MCF 10A (cell line): ENCODE measurements at regions of chr4 and their contacts with region 1.

Region 1: DNA sequence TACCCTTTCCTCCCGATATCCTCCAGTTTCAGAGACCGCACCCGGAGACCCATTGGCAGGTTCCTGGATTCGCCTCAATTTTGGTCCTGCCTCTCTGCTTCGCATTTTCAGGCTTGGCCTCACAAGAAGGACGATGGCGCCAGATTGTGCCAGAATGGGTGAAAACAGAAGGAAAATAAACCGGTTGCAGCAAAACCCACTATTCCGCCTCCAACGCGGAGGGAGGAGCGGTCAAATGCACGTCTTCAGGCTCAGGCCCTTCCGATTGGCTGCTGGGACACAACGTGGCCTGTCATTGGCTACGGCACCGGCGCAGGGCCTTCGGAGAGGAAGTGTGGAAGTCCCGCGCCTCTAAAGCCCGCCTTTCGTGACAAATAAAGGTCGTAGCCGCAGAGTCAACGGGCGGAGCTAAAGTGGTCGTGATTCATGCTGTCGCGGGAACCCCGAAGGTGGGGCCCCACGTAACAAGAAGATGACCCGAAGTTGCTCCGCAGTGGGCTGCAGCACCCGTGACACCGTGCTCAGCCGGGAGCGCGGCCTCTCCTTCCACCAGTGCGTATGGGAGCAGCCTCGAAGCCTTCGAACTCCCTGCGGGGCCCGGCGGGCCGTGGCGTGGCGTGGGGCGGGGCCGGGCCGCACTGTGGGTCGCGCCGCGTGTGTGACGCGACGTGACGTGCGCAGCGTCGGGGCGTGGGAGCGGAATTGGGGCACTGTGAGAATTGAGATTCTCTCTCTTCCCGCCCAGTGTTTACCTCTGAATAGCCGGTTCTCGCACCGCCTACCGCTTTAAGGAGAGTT is at the start of gene THAP9:
- DNase-seq: peak; percentile 99
- H3K4me3 Mint-ChIP-seq: no peak within 1 kb of the TSS
- H3K27ac Mint-ChIP-seq: no peak within 1 kb of the TSS
- H3K4me1 Mint-ChIP-seq: peaks cover 10% of the 10 kb centered on the region
- H3K27me3 Mint-ChIP-seq: no peaks in the 10 kb centered on the region
- CTCF ChIP-seq: no peak
- total RNA-seq, gene THAP9: 3.6 and 4.0 TPM in 2 replicates

Region 2: GRCh38 chr4:82428969-82429727 is 471.4 kb before region 1 on chr4:
- CTCF ChIA-PET with region 1: interaction called, 3 read pairs
- POLR2A ChIA-PET with region 1: interaction called, 22 read pairs
- intact Hi-C with region 1: no loop called
- DNase-seq: peak; percentile 92
- H3K4me3 Mint-ChIP-seq: peak overlapping the region; percentile 98
- H3K27ac Mint-ChIP-seq: peak overlapping the region; percentile 99
- H3K4me1 Mint-ChIP-seq: peaks cover 20% of the 10 kb centered on the region
- H3K27me3 Mint-ChIP-seq: no peaks in the 10 kb centered on the region
- CTCF ChIP-seq: peak; percentile 96

Region 3: GRCh38 chr4:82770607-82771006 is 129.9 kb before region 1 on chr4:
- CTCF ChIA-PET with region 1: no interaction called
- POLR2A ChIA-PET with region 1: no interaction called
- intact Hi-C with region 1: no loop called
- DNase-seq: no peak
- H3K4me3 Mint-ChIP-seq: no peak overlapping the region
- H3K27ac Mint-ChIP-seq: no peak overlapping the region
- H3K4me1 Mint-ChIP-seq: no peaks in the 10 kb centered on the region
- H3K27me3 Mint-ChIP-seq: no peaks in the 10 kb centered on the region
- CTCF ChIP-seq: no peak

Region 4: DNA sequence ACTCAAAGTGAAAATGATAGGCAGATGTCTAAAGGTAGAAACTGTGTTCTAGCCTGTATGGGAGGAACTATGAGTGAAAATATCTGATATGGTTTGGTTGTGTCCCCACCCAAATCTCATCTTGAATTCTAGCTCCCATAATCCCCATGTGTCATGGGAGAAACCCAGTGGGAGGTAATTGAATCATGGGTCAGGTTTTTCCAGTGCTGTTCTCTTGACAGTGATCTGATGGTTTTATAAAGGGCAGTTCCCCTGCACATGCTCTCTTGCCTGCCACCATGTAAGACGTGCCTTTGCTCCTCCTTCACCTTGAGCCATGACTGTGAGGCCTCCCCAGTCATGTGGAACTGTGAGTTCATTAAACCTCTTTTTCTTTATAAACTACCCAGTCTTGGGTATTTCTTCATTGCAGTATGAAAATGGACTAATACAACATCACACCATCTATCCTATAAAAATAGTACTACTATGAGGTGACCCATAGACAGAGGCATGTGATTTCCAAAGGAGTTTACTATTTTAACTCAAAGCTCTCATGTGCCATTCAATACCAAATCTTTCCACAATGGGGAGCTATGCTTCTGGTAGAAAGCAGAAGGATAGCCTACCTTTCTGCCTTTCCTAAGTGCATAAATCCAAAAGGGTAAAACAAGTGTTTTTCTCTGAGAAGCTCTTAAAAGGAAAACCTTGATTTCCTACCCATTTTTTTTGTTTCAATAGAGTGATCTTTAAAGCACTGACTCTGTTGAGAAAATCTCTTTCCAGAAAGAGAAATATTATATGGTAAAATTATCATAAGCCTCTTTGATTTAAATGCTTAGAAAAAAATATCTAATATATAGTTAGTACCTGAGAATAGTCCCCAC is 48.4 kb before region 1 on chr4:
- CTCF ChIA-PET with region 1: no interaction called
- POLR2A ChIA-PET with region 1: interaction called, 26 read pairs
- intact Hi-C with region 1: loop called (anchors 1 kb)
- DNase-seq: peak; percentile 58
- H3K4me3 Mint-ChIP-seq: no peak overlapping the region
- H3K27ac Mint-ChIP-seq: peak overlapping the region; percentile 1
- H3K4me1 Mint-ChIP-seq: peaks cover 6% of the 10 kb centered on the region
- H3K27me3 Mint-ChIP-seq: no peaks in the 10 kb centered on the region
- CTCF ChIP-seq: peak; percentile 33

Region 5: GRCh38 chr4:82865592-82865991 is 34.9 kb before region 1 on chr4:
- CTCF ChIA-PET with region 1: interaction called, 4 read pairs
- POLR2A ChIA-PET with region 1: interaction called, 21 read pairs
- intact Hi-C with region 1: no loop called
- DNase-seq: peak; percentile 86
- H3K4me3 Mint-ChIP-seq: peak overlapping the region; percentile 33
- H3K27ac Mint-ChIP-seq: peak overlapping the region; percentile 96
- H3K4me1 Mint-ChIP-seq: peaks cover 20% of the 10 kb centered on the region
- H3K27me3 Mint-ChIP-seq: no peaks in the 10 kb centered on the region
- CTCF ChIP-seq: no peak

Region 6: DNA sequence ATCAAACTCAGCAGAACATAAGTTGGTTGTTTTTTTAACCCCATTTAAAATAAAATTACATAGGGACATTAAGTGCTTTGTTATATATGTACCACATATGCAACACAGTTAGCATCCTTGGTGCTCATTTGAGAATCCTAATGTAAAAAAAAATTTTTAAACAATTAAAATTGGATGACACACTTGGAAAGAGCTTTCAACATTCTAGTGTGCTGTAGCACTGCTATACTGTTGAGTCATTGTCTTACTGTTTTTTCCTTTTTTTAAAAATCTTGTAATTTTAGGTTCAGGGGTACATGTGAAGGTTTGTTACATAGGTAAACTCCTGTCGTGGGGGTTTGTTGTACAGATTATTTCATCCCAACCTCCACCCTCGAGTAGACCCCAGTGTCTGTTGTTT is 12.8 kb after region 1 on chr4:
- CTCF ChIA-PET with region 1: no interaction called
- POLR2A ChIA-PET with region 1: interaction called, 14 read pairs
- intact Hi-C with region 1: no loop called
- DNase-seq: no peak
- H3K4me3 Mint-ChIP-seq: no peak overlapping the region
- H3K27ac Mint-ChIP-seq: no peak overlapping the region
- H3K4me1 Mint-ChIP-seq: no peaks in the 10 kb centered on the region
- H3K27me3 Mint-ChIP-seq: no peaks in the 10 kb centered on the region
- CTCF ChIP-seq: no peak

Region 7: DNA sequence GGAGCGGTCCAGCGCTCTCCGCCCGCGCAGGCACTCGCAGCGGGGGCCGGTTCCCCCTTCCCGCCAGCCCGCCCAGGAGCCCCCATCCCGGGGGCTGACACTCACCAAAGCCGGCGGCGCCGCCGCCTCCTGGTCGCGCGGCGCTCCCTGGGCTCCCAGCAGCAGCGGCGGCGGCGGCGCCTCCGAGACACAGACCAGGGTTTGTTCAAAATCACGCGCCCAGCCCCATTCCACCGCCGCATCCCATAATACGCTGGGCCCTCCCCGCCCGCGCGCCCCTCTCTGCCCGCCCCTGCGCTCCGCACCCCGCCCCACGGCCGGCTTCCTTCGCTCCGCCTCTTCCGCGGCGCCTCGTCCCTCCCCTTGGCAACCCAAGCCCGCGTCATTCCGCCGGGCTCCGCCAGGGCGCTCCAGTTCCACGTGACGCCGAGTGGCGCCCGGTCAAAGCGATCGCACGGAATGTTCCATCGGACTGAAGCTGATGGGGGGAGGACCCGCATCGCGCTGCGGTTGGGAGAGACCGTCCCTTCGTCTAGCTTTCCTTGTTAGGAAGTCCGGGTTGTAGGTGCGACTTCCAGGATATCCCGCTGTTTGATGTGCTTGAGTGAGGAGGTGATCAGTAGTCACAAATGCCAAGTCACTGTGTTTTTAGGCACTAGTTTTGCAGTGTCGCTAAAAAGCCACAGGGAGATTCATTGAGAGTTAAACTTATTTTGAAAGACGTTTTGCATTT is 112.3 kb after region 1 on chr4:
- CTCF ChIA-PET with region 1: interaction called, 5 read pairs
- POLR2A ChIA-PET with region 1: interaction called, 168 read pairs
- intact Hi-C with region 1: loop called (anchors 1 kb)
- DNase-seq: peak; percentile 98
- H3K4me3 Mint-ChIP-seq: peak overlapping the region; percentile 92
- H3K27ac Mint-ChIP-seq: peak overlapping the region; percentile 96
- H3K4me1 Mint-ChIP-seq: peaks cover 34% of the 10 kb centered on the region
- H3K27me3 Mint-ChIP-seq: no peaks in the 10 kb centered on the region
- CTCF ChIP-seq: peak; percentile 35

Region 8: GRCh38 chr4:83034630-83035494 is 134.3 kb after region 1 on chr4 and contains the start of gene COPS4:
- CTCF ChIA-PET with region 1: interaction called, 8 read pairs
- POLR2A ChIA-PET with region 1: interaction called, 52 read pairs
- intact Hi-C with region 1: no loop called
- DNase-seq: peak; percentile 100
- H3K4me3 Mint-ChIP-seq: peak within 1 kb of the TSS; percentile 96
- H3K27ac Mint-ChIP-seq: peak within 1 kb of the TSS; percentile 92
- H3K4me1 Mint-ChIP-seq: peaks cover 8% of the 10 kb centered on the region
- H3K27me3 Mint-ChIP-seq: no peaks in the 10 kb centered on the region
- CTCF ChIP-seq: no peak
- total RNA-seq, gene COPS4: 34.7 and 36.6 TPM in 2 replicates